Left cardiac atrium (tissue), 4 donors: ENCODE measurements at regions of chr3 and their contacts with region 1.

Region 1: GRCh38 chr3:188954590-188955208 is 217.1 kb upstream of the TPRG1 start:
- DNase-seq: peak; percentile 87
- ATAC-seq: peak; percentile 72 to 87

Region 2: DNA sequence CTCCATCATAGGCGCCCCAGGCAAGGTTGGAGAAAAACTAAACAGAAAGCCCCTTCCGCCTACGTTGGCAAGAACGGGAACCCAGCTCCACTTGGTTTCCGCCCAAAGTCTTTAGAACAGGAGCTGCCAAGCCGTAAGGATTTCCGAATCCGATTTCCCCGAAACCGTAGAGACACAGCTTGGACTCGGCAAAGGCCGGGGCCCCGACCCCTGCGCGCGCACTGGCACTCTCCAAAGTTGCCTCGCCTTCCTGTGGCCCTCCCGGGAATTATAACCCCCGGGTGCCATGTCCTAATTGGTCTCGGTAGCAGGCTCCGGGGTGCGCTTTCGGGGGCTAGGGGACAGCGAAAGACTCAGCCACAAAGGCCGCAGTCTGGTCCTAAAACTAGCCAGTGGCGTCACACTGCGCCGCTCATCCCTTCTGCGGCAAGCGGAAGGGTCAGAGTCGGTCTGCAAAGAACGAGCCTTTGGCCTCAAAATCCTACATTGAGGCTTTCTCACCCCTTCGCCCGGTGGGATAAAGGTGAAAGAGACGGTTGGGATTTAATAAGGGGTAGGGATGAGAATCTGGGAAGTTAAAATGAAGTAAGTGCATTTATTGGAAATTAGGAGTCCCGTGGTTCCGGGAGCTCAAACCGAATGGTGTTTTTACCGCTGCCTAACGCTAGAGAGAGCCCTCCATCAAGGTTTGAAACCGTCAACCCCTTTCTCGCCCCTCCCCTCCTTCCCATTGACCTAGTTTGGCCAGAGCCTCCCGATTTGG is 1216.2 kb before region 1 on chr3:
- intact Hi-C with region 1: loop called (anchors 2 to 5 kb)
- DNase-seq: peak; percentile 90
- ATAC-seq: peak; percentile 67 to 77

Region 3: GRCh38 chr3:188052169-188053030 is 902.3 kb before region 1 on chr3:
- intact Hi-C with region 1: loop called in 1 of 2 experiments (anchors 5 kb)
- DNase-seq: peak; percentile 87
- ATAC-seq: peak; percentile 97 to 98

Region 4: GRCh38 chr3:188154014-188154808 is 800.5 kb before region 1 on chr3 and contains the start of gene LPP:
- intact Hi-C with region 1: loop called in 1 of 2 experiments (anchors 10 kb)
- DNase-seq: peak; percentile 80
- ATAC-seq: peak; percentile 88 to 93
- total RNA-seq, gene LPP: 152 to 181 TPM

Region 5: DNA sequence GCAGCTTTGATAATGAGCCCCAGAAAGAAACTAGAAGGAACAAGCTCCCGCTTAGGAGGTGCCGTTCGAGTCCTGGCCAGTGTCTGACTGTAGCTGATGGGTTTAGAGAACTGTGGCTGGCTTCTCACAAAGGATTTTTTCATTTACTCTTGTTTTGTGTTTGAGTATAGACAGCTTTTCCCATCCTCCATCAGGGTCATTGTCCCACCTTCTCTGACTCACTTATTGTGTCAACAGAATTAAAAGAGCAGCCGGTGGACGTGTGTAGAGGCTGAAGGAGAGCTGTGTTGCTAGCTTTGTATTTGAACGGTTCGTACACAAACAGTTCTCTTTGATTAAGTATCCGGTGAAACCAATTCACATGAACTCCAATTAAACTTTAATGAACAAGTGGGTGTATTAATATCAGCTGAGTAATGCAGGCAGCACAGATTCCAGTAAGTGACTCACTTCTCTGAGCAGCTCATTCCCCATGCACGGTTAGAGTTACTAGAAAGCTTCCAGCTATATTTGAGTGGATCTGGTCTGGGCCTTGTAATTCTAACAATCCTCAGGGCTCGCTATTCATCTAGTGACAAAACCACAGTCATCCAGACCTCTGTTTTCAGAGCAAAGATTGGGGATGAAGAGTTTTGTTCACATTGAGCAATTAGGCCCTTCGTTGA is 659.7 kb before region 1 on chr3:
- intact Hi-C with region 1: loop called in 1 of 2 experiments (anchors 10 kb)
- DNase-seq: no peak
- ATAC-seq: peak; percentile 81 to 92

Region 6: GRCh38 chr3:188348435-188349244 is 606.1 kb before region 1 on chr3:
- intact Hi-C with region 1: loop called in 1 of 2 experiments (anchors 10 kb)
- DNase-seq: peak; percentile 93
- ATAC-seq: peak; percentile 85 to 92

Region 7: DNA sequence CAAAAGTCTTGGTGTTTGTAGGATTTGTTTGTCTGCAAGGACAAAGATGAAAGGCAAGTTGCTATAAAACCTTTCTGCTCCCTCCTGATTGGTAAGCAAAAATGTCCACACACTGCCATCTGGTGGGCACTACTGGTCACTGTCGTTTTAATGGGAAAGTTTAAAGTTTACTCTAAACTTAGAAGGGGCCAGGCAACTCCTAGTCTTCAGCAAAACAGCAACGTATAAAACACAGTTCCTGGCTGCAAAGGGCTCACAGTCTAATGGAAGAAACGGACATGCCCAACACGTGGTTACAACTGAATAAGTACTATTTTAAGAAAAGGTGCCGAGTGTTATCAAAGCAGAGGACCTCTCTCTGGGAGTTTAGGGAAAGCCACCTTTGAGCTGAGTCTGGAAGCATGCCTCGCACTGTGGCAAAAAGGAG is 193.4 kb after region 1 on chr3:
- intact Hi-C with region 1: loop called in 1 of 2 experiments (anchors 5 kb)
- DNase-seq: peak; percentile 54
- ATAC-seq: peak; percentile 68 to 78